ENCODE measurements at regions of chr3 and their contacts with region 1.

Region 1: DNA sequence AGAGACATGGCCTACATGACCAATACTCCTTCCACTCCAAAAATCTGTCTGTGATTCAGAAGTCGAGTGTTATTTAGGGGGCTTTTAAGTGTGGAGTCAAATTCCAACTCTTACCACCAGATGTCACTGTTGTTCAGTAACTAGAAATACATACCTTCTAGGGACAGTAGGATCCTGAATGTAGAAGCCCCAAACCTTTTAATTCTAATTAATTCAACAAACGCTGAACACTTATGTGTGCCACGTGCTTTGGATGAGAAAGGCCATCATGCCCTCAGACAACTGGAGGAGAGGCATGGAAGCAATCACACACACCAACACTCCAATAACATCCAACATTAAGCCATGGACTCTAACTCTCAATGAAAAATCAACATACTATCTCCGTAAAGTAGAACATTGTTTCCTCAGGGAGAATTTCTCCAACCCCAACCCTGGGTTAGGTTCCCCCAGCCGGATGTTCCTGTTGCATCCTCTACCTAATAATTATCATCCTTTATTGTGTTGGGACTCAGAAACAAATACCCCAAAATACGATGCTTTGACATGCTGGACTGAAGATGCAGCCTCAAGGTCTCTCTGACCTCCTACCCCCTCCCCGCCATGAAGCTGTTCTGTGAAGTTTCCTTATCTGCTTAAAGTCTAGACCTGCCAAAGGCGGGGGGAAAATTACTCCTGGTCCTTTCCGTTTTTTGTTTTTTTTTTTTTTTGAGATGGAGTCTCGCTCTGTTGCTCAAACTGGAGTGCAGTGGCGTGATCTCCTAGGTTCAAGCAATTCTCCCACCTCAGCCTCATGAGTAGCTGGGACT is 8.0 kb upstream of the CCDC13 start:
- DNase-seq: no peak
- H3K4me3 ChIP-seq: no peak overlapping the region
- H3K27ac ChIP-seq: peak overlapping the region; percentile 43 to 64
- H3K4me1 ChIP-seq: no peaks in the 10 kb centered on the region
- H3K27me3 ChIP-seq: no peaks in the 10 kb centered on the region
- CTCF ChIP-seq: peak; percentile 78 to 88 (median 87)
- POLR2A ChIP-seq: no peak

Region 2: DNA sequence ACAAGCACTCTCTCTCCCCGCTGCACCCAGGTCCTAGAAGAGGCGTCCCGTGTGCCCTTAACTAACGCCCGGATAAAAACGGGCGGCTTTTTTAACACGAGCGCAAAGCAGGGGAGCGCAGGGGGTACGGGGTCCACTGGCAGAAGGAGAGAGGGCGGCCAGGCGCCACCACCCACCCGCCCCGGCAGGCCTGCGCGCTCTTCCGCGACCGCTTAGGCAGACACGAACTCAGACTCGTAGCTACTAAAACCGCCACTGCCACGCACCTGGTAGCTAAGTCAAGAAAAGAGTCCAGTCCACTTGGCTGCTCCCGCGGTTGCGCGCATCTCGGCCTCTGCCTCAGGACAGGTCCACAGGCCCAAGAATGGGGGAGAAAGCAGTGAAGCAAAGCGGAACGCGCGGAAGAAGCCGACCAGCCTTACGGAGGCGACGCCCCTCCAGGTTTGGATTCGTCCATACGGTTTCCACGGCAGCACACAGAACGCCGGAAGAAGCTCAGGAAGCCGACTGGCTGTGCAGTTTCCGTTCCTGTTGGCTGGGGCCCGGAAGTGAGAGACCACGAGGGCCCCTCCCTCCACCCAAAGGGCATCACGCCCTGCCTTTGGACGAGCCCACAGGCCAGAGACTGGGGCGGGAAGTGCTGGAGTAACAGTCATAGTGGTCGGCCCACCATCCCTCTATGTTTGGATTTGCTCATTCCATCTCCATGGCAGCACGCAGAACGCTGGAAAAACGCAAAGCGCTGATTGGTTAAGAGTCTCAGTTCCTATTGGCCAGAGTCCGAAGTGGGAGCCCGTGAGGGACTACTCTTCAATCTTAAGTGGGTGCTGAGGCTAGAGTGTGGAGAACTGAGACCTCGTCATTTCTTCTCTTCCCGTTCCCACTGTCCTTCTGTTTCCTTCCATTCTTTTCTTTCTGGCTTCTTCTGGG is 819.1 kb before region 1 on chr3 and contains the start of gene ULK4:
- intact Hi-C with region 1: no loop called
- DNase-seq: peak; percentile 94 to 95
- H3K4me3 ChIP-seq: peak within 1 kb of the TSS; percentile 79 to 93 (median 91)
- H3K27ac ChIP-seq: peak within 1 kb of the TSS; percentile 81 to 91
- H3K4me1 ChIP-seq: peaks cover 0 to 3% of the 10 kb centered on the region in 2 donors
- H3K27me3 ChIP-seq: no peaks in the 10 kb centered on the region
- CTCF ChIP-seq: peak in 1 of 3 donors; percentile 14
- POLR2A ChIP-seq: no peak
- total RNA-seq, gene ULK4: 23.0 to 52.8 (median 31.8) TPM

Region 3: DNA sequence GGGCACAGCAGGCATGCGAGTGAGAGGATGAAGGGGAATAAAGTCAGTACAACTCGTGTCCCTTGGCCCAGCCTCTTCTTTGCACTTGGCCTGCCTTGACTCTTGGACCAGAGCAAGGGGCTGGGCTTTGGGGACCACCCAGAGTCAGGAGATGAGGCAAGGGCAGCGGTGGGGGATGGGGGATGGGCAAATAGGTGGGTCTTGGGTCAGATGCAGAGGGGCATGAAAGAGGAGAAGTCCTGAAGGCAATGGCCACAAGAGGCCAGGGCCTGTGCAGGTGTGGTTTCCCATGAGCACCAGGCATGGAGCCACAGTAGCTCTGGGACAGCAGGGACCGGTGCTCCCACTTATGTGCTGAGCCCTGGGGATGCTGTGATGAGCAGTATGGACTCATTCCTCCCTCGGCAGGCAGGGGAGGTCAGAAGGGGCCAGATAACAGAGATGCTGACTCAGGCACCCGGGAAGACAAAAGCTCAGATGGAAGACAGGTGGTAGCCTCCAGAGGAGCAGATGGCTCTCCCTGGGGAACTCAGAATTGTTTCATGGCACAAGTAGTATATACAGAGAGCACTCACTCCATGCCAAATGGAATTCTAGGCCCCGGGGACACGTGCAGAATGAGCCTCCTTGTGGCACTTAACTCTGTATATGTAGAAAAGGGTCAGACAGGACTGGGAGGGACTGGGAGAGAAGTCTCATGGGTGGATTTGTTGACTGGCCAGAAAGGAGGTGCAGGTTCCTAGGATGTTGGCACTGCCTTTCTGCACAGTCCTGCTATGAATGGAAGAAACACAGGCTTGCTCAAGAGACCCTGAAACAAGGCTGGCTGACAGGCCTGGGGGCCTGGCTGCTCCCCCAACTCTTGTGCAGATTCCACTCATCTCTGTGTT is 113.3 kb before region 1 on chr3:
- intact Hi-C with region 1: no loop called
- DNase-seq: no peak
- H3K4me3 ChIP-seq: no peak overlapping the region
- H3K27ac ChIP-seq: no peak overlapping the region
- H3K4me1 ChIP-seq: no peaks in the 10 kb centered on the region
- H3K27me3 ChIP-seq: no peaks in the 10 kb centered on the region
- CTCF ChIP-seq: no peak
- POLR2A ChIP-seq: no peak

Region 4: GRCh38 chr3:42839616-42840015 is 58.5 kb after region 1 on chr3:
- intact Hi-C with region 1: loop called (anchors 10 kb)
- DNase-seq: peak in 1 of 2 donors; percentile 44
- H3K4me3 ChIP-seq: no peak overlapping the region
- H3K27ac ChIP-seq: no peak overlapping the region
- H3K4me1 ChIP-seq: no peaks in the 10 kb centered on the region
- H3K27me3 ChIP-seq: no peaks in the 10 kb centered on the region
- CTCF ChIP-seq: peak; percentile 91 to 95 (median 94)
- POLR2A ChIP-seq: no peak

Measured in breast epithelium (tissue), 4 donors.